AG04450 (cell line): ENCODE measurements at regions of chr20 and their contacts with region 1.

Region 1: GRCh38 chr20:63309261-63310071 is 16.5 kb downstream of the COL20A1 start:
- DNase-seq: no peak
- H3K4me3 ChIP-seq: no peak overlapping the region
- H3K27ac ChIP-seq: no peak overlapping the region
- H3K27me3 ChIP-seq: peaks cover 3% of the 10 kb centered on the region
- CTCF ChIP-seq: peak; percentile 80

Region 2: GRCh38 chr20:63381807-63382322 is 72.4 kb after region 1 on chr20:
- CTCF ChIA-PET with region 1: interaction called, 47 read pairs
- POLR2A ChIA-PET with region 1: interaction called, 4 read pairs
- DNase-seq: no peak
- H3K4me3 ChIP-seq: no peak overlapping the region
- H3K27ac ChIP-seq: no peak overlapping the region
- H3K27me3 ChIP-seq: peaks cover 14% of the 10 kb centered on the region
- CTCF ChIP-seq: peak; percentile 83

Region 3: DNA sequence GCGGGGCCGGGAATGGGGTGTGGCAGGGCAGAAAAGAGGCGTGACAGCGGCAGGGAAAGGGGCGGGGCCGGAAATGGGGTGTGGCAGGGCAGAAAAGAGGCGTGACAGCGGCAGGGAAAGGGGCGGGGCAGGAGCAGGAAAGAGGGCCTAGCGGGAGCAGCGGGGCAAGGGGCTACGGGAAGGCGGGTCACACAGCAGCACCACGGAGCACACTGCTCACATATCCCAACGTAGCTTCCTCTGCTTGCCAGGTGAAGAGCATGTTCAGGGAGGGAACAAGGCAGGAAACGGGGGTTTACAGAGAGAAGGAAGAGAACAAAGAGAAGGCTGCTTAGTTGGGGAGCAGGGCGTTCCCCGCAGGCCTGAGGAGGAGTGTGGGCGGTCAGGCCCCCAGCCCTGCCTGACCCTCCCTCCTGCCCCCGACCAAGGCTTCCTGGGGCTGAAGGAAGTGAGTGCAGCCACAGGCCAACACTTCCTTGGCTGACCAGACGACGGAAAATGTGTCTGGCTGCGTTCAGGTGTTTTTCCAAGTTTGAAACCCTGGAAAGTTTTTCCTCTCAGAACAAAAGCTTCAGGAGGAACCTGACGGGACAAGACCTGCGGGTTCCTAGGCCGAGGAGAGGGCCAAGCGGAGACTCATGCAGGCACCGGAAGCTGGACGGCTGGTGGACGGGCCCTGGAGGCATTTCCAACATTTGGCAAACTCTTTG is 632.9 kb after region 1 on chr20:
- CTCF ChIA-PET with region 1: no interaction called
- POLR2A ChIA-PET with region 1: no interaction called
- DNase-seq: no peak
- H3K4me3 ChIP-seq: no peak overlapping the region
- H3K27ac ChIP-seq: no peak overlapping the region
- H3K27me3 ChIP-seq: no peaks in the 10 kb centered on the region
- CTCF ChIP-seq: no peak